Motor neuron (in vitro differentiated cells): ENCODE measurements at regions of chr4 and their contacts with region 1.

Region 1: DNA sequence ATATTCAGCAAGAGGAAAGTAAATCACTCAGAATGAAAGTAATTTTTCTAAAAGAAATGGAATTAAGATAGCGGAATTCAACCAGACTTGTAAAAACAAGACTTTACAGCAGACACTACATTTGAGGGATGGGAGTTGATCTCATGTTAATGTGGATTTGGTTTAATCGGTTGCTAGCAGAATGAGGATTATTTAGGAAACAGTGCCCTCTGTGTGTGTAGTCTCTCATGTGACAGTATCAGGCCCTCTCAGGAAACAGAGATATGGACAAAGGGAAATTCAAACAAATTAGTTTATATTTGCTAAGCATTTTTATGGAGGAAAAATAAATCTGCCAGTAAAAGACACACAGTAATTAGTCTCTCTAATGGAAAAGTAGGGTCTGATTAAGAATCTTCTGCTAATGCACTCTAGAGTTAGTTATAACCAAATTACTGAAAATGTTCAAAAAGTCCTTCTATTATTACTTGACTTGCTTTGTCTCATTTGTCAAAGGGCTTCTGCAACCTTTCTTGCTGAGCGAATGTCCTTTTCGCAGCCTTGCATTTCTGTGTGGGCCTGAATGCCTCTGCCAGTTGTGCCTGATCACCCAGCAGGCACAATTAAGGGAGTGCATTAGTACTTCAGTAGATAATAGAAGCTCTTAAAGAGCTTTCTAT is 1282.3 kb upstream of the TENM3 start:
- ATAC-seq: peak in 6 of 8 experiments; percentile 36 to 96 (median 91)
- H3K4me3 ChIP-seq: no peak overlapping the region
- H3K27ac ChIP-seq: no peak overlapping the region
- H3K4me1 ChIP-seq: peaks cover 0 to 15% of the 10 kb centered on the region in 2 donors

Region 2: DNA sequence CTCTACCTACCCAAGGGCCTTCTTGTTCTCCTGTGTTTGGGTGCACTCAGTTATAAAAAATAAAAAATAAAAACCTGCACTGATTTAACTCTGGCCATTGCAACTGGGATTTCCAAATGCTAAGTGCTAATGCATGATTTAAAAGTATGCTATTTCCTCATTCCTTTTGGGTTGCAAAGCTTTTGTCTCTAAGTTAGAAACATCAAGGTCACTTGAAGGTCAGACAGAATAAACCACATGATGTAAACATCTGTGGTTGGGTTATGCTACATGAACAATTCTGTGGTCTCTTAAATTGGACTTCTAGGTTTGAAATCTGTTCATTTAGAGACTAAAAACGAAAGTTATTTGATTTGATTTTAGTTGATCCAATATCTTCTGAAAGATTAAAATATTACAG is 265.0 kb before region 1 on chr4:
- in situ Hi-C with region 1: loop called in 1 of 9 experiments (anchors 25 kb)
- ATAC-seq: peak in 2 of 8 experiments; percentile 42 to 57
- H3K4me3 ChIP-seq: no peak overlapping the region
- H3K27ac ChIP-seq: no peak overlapping the region
- H3K4me1 ChIP-seq: peaks cover 0 to 14% of the 10 kb centered on the region in 2 donors

Region 3: GRCh38 chr4:181784881-181785280 is 824.0 kb after region 1 on chr4:
- in situ Hi-C with region 1: no loop called
- ATAC-seq: peak in 2 of 8 experiments; percentile 55 to 92
- H3K4me3 ChIP-seq: no peak overlapping the region
- H3K27ac ChIP-seq: no peak overlapping the region
- H3K4me1 ChIP-seq: no peaks in the 10 kb centered on the region

Region 4: GRCh38 chr4:182404376-182404775 is 1443.5 kb after region 1 on chr4:
- in situ Hi-C with region 1: no loop called
- ATAC-seq: peak in 1 of 8 experiments; percentile 34
- H3K4me3 ChIP-seq: no peak overlapping the region
- H3K27ac ChIP-seq: no peak overlapping the region
- H3K4me1 ChIP-seq: peaks cover 0 to 7% of the 10 kb centered on the region in 2 donors